ENCODE measurements at regions of chr16 and their contacts with region 1.

Region 1: GRCh38 chr16:49921791-49922456 is 66.0 kb upstream of the ZNF423 start:
- DNase-seq: peak; percentile 43
- H3K4me3 ChIP-seq: no peak overlapping the region
- CTCF ChIP-seq: peak; percentile 66

Region 2: GRCh38 chr16:49407873-49408550 is 513.9 kb before region 1 on chr16:
- in situ Hi-C with region 1: loop called (anchors 5 kb)
- DNase-seq: peak; percentile 62
- H3K4me3 ChIP-seq: no peak overlapping the region
- CTCF ChIP-seq: peak; percentile 91